ENCODE measurements at regions of chr5 and their contacts with region 1.

Region 1: GRCh38 chr5:66171349-66172344 is 27.5 kb downstream of the SREK1 start:
- DNase-seq: no peak

Region 2: DNA sequence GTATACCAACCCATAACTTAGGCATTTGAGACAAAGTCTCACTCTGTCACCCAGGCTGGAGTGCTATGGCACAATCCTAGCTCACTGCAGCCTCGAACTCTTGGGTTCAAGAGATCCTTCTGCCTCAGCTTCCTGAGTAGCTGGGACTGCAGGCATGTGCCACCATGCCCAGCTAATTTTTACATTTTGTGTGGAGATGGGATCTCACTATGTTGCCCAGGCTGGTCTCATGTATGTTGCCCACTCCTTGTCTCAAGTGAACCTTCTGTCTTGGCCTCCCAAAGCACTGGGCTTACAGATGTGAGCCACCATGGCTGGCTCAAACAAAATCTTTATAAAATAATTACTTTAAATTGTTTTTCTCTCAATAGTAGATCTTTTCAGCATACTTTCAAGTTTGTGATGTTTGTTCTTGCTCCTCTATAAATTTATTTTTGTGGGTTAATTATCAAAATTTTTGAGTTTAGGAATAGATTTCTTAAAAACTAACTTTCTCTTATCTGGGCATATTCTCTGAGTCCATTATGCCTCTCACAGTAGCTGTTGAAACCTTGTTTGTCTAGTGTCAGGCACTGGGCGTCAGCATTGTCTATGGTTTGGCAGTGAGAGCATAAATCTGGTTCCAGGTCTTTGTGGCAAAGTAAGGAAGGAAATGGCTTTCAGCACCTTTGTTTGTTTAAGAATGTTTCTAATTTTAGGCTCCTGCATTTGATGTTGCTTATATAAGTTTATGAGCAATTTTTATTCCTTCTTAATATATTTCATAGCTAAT is 411.0 kb before region 1 on chr5:
- intact Hi-C with region 1: loop called (anchors 10 kb)
- DNase-seq: no peak

Region 3: DNA sequence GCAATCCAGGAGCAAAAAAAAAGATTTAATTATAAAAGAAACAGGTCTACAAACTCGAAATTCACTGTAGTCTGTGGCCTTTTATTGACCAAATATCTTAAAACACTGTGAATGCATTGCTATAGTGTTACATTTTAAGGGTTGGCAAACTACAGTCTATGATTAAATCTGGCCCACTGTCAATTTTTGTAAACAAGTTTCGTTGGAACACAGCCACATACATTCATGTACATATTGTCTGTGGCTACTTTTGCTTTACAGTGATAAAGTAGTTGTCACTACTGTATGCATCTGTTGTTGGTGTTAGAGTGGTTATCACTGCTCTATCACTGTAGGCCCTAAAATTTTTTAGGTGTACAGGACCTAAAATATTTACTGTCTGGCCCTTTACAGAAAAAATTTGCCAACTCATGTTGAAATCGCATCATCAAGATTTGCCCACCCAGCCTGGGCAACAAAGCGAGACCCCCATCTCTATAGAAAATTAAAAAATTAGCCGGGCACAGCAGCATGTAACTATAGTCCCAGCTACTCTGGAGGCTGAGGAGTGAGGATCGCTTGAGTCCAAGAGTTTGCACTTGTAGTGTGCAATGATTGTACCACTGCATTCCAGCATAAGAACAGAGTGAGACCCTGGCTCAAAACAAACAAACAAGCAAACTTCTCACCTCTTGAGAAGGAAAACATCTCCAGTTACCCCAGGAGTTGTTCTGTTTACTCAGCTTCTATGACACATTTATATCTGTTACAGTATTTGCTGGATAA is 156.3 kb before region 1 on chr5:
- intact Hi-C with region 1: no loop called
- DNase-seq: no peak

Region 4: DNA sequence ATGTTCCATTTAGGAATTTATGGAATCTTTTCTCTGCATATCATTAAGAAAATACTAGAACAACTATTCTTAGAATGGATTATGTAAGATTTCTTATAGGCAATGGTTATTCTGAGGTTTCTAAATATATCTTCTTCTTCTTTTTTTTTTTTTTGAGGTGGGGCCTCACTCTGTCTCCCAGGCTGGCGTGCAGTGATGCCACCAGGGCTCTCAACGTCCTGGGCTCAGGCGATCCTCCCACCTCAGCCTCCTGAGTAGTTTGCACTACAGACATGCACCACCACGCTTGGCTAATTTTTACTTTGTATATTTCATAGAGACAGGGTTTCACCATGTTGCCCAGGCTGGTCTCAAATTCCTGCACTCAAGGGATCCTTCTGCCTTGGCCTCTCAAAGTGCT is 109.6 kb after region 1 on chr5:
- intact Hi-C with region 1: no loop called
- DNase-seq: no peak

Region 5: DNA sequence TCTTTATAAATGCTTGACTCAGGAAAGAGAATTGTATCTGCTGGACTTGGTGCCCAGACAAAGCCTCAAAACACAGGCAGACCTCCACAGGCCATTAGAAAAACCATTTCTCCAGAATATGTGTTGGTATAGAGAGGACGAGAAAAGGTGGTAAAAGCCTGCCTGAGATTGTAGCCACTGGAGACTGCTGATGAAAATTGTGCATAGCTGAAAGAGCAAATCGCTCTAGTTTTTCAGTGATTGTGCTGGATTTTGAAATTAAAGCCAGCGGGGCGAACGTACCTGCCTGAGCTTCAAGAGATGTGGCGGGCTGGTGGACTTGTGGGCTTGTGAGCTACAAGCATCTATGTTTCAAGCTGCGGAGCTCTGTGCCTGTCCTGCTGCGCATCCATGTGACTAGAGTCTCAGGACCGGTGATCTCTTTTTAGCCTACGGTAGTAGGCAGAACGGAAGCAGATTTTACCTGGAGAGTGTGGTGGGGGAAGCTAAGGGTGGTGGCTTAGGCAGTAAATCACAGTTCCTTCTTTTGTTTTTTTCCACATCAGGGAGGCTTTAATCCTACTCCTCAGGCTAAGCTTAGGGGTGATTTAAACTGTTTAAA is 166.1 kb after region 1 on chr5:
- intact Hi-C with region 1: no loop called
- DNase-seq: no peak

Region 6: DNA sequence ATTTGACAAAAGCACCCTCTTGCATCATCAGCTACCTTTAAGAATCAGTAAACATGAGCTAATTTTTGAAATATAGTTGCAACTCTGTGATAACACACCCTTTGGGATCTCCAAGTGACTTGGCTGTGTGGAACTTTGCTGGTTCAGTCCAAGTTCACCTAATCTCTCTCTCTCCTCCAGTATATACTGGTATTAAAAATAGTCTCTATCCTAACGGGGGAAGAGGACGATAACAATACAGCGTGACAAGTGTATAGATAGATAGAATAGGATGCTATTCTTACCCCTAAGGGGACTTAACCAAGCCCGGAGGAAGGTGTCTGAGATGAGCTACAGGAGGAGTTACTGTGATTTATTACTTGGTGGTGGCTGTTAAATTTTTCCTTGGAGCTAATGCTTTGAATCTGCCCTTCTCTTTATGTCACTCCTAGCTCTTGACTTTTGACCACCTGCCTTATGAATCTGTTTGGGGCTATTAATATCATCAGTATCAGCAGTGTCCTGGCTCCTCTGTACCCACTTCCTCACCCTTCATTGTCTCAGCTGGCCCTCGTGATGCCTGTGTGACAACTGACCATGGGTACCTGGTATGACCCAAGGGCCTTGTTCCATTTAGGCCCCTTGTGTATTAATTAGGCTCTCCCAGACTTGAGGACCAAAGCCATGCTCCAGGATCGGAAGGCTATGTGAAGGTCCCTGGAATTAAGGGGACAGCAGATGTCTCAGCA is 196.3 kb after region 1 on chr5:
- intact Hi-C with region 1: no loop called
- DNase-seq: no peak